CD4-positive, alpha-beta T cell (primary cell): ENCODE measurements at regions of chr14 and their contacts with region 1.

Region 1: GRCh38 chr14:39181026-39181692 is 6.1 kb downstream of the PNN start:
- DNase-seq: no peak
- ATAC-seq: peak; percentile 22
- H3K4me3 ChIP-seq: no peak overlapping the region
- H3K4me3 Mint-ChIP-seq: no peak overlapping the region
- H3K27ac ChIP-seq: no peak overlapping the region
- H3K27ac Mint-ChIP-seq: no peak overlapping the region
- H3K4me1 ChIP-seq: peaks cover 20% of the 10 kb centered on the region
- H3K4me1 Mint-ChIP-seq: peaks cover 22% of the 10 kb centered on the region
- H3K27me3 ChIP-seq: no peaks in the 10 kb centered on the region
- H3K27me3 Mint-ChIP-seq: no peaks in the 10 kb centered on the region
- CTCF ChIP-seq: no peak

Region 2: DNA sequence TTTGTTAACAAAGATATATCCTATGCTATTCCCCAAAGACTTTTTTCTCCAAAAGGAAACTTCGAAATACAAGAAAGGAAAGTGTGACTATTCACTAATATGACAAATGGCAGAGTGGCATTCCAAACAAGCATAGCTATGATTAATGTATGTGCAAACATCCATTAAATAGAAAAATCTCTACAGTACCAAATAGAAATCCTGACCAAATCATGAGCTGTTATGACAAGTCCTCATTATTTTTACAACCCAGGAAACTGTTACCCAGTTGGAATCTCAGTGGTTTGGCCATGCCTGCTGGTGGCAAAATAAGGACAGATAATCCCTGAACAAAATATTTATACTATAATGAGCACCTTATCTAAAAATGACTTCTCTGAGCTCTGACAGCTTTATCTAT is 280.3 kb before region 1 on chr14:
- CTCF ChIA-PET with region 1: no interaction called
- POLR2A ChIA-PET with region 1: no interaction called
- intact Hi-C with region 1: no loop called
- DNase-seq: no peak
- ATAC-seq: no peak
- H3K4me3 ChIP-seq: no peak overlapping the region
- H3K4me3 Mint-ChIP-seq: no peak overlapping the region
- H3K27ac ChIP-seq: no peak overlapping the region
- H3K27ac Mint-ChIP-seq: no peak overlapping the region
- H3K4me1 ChIP-seq: no peaks in the 10 kb centered on the region
- H3K4me1 Mint-ChIP-seq: no peaks in the 10 kb centered on the region
- H3K27me3 ChIP-seq: no peaks in the 10 kb centered on the region
- H3K27me3 Mint-ChIP-seq: no peaks in the 10 kb centered on the region
- CTCF ChIP-seq: no peak

Region 3: DNA sequence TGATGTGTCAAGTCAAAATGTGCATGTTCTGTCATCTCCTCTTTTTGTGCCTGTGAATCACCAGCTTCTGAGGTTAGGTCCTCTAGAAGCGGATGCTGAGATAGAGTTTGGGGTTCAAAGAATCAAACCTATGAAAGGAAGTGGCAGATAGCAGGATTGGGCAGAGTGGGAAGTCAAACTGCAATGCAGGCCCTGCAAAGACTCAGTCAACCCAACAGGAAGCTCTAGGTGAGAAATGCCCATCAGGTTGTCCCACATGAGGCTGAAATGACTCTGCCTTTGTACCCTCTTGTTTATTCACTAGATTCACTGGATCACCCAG is 48.0 kb after region 1 on chr14:
- CTCF ChIA-PET with region 1: interaction called, 4 read pairs
- POLR2A ChIA-PET with region 1: interaction called, 4 read pairs
- intact Hi-C with region 1: loop called in 1 of 2 experiments (anchors 5 kb)
- DNase-seq: peak in 12 of 14 experiments; percentile 7 to 90 (median 34)
- ATAC-seq: peak; percentile 91
- H3K4me3 ChIP-seq: no peak overlapping the region
- H3K4me3 Mint-ChIP-seq: no peak overlapping the region
- H3K27ac ChIP-seq: peak overlapping the region; percentile 44 to 78
- H3K27ac Mint-ChIP-seq: peak overlapping the region; percentile 57
- H3K4me1 ChIP-seq: peaks cover 24% of the 10 kb centered on the region
- H3K4me1 Mint-ChIP-seq: peaks cover 35% of the 10 kb centered on the region
- H3K27me3 ChIP-seq: no peaks in the 10 kb centered on the region
- H3K27me3 Mint-ChIP-seq: no peaks in the 10 kb centered on the region
- CTCF ChIP-seq: no peak